Mammary epithelial cell (primary cell): ENCODE measurements at regions of chr9 and their contacts with region 1.

Region 1: DNA sequence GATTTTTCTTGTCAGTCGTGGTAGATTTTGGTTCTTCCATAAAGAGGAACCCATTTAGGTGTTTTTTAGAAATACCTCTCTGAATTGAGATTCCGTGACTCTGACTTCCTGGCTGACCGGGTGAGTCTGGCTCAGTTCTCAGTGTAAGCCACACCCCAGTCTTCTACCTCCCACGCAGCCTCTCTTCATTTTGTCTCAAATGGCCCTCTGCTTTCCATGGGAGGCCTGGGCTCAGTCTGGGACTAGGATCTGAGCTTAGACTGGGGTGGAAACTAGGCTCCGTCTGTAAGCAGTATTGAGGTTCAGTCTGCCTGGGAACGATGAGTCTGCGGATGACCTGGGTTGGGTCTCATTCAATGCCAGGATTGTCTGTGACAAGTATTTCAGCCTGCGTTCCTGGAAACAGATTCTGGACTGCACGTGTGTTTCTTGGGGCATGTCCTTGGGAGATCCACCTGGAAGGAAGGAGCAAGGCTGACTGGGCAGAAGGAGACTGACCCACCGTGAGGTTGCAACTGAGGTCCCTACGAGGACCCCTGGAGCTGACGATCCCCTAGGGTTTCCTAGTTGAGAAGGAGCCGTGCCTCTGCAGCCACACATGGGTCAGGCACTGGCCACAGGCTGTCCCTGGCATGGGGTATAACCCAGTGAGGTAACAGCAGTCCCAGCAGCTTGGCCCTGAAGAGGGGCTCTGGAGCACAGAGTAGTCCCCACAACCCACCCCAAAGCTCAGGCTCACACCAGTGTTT is 12.4 kb upstream of the CRB2 start:
- DNase-seq: peak; percentile 39
- H3K4me3 ChIP-seq: no peak overlapping the region
- H3K27ac ChIP-seq: no peak overlapping the region
- H3K4me1 ChIP-seq: peaks cover 17% of the 10 kb centered on the region
- H3K27me3 ChIP-seq: no peaks in the 10 kb centered on the region
- CTCF ChIP-seq: no peak

Region 2: DNA sequence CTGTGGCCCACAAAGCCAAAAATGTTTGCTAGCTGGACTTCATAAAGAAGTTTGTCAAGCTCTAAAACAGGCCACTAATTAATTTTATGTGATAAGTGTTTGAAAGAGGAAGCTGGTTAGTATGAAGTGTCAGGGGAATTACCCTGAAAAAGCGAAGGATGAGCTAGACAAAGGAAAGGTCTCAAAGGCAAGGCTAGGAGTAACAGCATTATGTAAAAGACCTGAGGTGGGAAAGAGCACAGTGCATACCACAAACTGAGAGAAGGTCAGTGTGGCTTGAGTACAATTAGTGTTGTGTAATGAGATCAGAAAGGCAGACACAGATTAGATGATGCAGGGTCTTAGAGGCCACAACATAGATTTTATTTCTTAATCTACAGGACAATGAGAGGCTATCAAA is 468.1 kb before region 1 on chr9:
- CTCF ChIA-PET with region 1: interaction called, 10 read pairs
- dilution Hi-C with region 1: no loop called
- in situ Hi-C with region 1: no loop called
- intact Hi-C with region 1: no loop called
- DNase-seq: no peak
- H3K4me3 ChIP-seq: no peak overlapping the region
- H3K27ac ChIP-seq: no peak overlapping the region
- H3K4me1 ChIP-seq: no peaks in the 10 kb centered on the region
- H3K27me3 ChIP-seq: no peaks in the 10 kb centered on the region
- CTCF ChIP-seq: no peak